Mammary epithelial cell (primary cell): ENCODE measurements at regions of chr10 and their contacts with region 1.

Region 1: GRCh38 chr10:88616251-88616977 is 29.9 kb downstream of the LIPJ start:
- DNase-seq: no peak
- H3K4me3 ChIP-seq: no peak overlapping the region
- H3K27ac ChIP-seq: no peak overlapping the region
- H3K4me1 ChIP-seq: no peaks in the 10 kb centered on the region
- H3K27me3 ChIP-seq: no peaks in the 10 kb centered on the region
- CTCF ChIP-seq: no peak

Region 2: DNA sequence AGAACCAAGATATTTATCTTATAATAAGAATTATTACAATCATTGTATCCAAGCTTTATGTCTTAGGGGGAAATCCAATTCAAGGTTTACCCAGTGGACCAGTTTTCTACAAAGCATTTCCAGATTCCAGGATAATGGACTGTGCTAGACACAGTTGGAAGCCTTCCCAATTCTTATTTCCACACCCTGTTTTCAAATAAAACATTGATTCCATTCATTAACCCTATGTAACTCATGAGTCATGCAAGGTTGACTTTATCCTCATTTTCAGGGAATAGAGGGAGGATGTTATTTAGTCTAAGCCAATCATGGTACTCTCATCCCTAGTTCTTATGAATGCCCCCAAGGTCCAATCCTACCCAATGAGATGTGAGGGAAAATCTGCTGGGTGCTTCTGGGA is 179.0 kb before region 1 on chr10:
- CTCF ChIA-PET with region 1: no interaction called
- dilution Hi-C with region 1: no loop called
- in situ Hi-C with region 1: no loop called
- intact Hi-C with region 1: no loop called
- DNase-seq: peak; percentile 47
- H3K4me3 ChIP-seq: no peak overlapping the region
- H3K27ac ChIP-seq: no peak overlapping the region
- H3K4me1 ChIP-seq: peaks cover 5% of the 10 kb centered on the region
- H3K27me3 ChIP-seq: no peaks in the 10 kb centered on the region
- CTCF ChIP-seq: no peak

Region 3: DNA sequence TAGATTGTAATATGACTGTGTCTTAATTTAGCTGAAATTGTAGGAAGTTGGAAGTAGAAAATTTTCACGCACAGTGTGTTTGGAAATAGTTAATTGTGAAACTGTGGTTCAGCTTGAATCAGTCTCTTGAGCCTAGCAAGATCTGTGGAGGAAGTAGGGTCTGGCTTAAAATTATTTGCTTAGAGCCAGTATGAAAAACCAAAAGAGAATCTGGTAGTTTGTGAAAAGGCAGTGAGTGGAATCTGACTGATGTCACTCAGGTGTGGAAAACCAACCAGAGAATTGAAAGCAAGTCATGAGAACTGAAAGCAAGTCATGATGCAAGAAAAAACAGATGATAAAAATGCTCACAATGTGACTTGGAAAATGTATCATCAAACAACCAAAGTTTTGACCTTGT is 18.4 kb before region 1 on chr10:
- CTCF ChIA-PET with region 1: no interaction called
- dilution Hi-C with region 1: no loop called
- in situ Hi-C with region 1: no loop called
- intact Hi-C with region 1: no loop called
- DNase-seq: no peak
- H3K4me3 ChIP-seq: no peak overlapping the region
- H3K27ac ChIP-seq: no peak overlapping the region
- H3K4me1 ChIP-seq: no peaks in the 10 kb centered on the region
- H3K27me3 ChIP-seq: no peaks in the 10 kb centered on the region
- CTCF ChIP-seq: no peak

Region 4: GRCh38 chr10:88642978-88643377 is 26.6 kb after region 1 on chr10:
- CTCF ChIA-PET with region 1: no interaction called
- dilution Hi-C with region 1: no loop called
- in situ Hi-C with region 1: no loop called
- intact Hi-C with region 1: no loop called
- DNase-seq: peak; percentile 42
- H3K4me3 ChIP-seq: no peak overlapping the region
- H3K27ac ChIP-seq: no peak overlapping the region
- H3K4me1 ChIP-seq: peaks cover 6% of the 10 kb centered on the region
- H3K27me3 ChIP-seq: no peaks in the 10 kb centered on the region
- CTCF ChIP-seq: no peak

Region 5: GRCh38 chr10:88661018-88661417 is 44.6 kb after region 1 on chr10:
- CTCF ChIA-PET with region 1: no interaction called
- dilution Hi-C with region 1: no loop called
- in situ Hi-C with region 1: no loop called
- intact Hi-C with region 1: loop called (anchors 1 kb)
- DNase-seq: no peak
- H3K4me3 ChIP-seq: no peak overlapping the region
- H3K27ac ChIP-seq: no peak overlapping the region
- H3K4me1 ChIP-seq: peaks cover 10% of the 10 kb centered on the region
- H3K27me3 ChIP-seq: no peaks in the 10 kb centered on the region
- CTCF ChIP-seq: no peak

Region 6: DNA sequence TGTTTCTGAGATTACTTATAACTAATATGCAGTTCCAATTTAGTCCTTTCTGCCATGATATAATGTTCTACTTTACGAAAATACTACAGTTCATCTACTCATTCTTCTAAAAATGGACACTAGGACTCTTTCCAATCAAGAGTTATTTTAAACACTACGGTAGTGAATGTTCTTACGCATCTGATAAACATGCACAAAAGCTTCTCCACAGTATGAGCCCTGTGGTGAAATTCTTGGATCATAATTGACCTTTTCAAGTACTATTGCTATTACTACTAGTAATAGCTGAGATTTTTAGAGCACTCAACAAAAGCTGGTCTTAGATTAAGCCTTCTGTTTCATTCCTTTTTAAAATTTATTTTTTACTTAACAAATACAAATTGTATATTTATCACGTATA is 484.3 kb after region 1 on chr10:
- CTCF ChIA-PET with region 1: no interaction called
- dilution Hi-C with region 1: no loop called
- in situ Hi-C with region 1: no loop called
- intact Hi-C with region 1: no loop called
- DNase-seq: no peak
- H3K4me3 ChIP-seq: no peak overlapping the region
- H3K27ac ChIP-seq: no peak overlapping the region
- H3K4me1 ChIP-seq: no peaks in the 10 kb centered on the region
- H3K27me3 ChIP-seq: no peaks in the 10 kb centered on the region
- CTCF ChIP-seq: no peak